Activated T-helper 2 cell treated with anti-CD3 and anti-CD28 coated beads, Interferon-gamma antibody, Interleukin-2, Interleukin-4, amounts not matched to agents 10 μg/mL and 5 μg/mL and 100 μg/mL, durations not matched to agents 14 hours and 24 hours and 36 hours (primary cell): ENCODE measurements at regions of chr6 and their contacts with region 1.

Region 1: DNA sequence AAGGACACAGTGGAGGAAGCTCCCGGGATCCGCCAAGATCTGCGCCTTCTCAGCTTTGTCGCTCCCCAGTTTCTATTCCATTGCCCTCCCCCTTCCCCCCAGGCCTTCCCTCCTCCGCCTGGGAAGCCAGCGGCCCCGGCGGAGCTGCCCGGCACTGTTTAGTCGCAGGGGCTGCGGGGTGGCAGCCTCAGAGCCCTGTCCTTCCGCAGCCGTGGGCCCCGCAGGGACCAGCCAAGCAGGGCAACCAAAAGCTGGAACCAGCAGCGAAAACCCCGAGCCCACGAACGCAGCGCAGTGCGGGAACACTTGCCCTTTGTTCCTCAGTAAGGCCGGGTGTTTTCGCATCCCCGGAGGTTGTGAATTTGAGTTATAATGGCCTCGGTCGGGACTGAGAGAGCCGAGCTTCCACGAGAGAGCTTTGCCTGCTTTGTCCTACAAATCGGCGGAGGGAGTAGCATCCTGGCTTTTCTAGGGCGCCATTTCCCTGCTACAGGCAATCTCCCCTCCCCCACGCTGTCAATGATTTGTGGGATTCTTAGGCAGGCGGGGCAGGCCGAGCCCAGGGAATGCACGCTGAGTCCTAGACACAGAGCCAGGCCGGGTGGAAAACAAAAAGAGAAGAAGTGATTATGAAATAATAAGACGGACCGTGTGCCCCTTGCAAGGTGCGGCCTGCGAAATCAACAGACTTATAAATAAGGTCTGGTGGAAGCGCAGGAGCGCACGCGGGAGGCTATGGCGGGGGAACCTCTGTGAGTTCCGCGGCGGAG is 4.0 kb upstream of the TUBB2B start:
- DNase-seq: no peak
- H3K4me3 Mint-ChIP-seq: no peak overlapping the region
- H3K27ac Mint-ChIP-seq: no peak overlapping the region
- H3K4me1 Mint-ChIP-seq: peaks cover 28% of the 10 kb centered on the region
- H3K27me3 Mint-ChIP-seq: peaks cover 81% of the 10 kb centered on the region

Region 2: DNA sequence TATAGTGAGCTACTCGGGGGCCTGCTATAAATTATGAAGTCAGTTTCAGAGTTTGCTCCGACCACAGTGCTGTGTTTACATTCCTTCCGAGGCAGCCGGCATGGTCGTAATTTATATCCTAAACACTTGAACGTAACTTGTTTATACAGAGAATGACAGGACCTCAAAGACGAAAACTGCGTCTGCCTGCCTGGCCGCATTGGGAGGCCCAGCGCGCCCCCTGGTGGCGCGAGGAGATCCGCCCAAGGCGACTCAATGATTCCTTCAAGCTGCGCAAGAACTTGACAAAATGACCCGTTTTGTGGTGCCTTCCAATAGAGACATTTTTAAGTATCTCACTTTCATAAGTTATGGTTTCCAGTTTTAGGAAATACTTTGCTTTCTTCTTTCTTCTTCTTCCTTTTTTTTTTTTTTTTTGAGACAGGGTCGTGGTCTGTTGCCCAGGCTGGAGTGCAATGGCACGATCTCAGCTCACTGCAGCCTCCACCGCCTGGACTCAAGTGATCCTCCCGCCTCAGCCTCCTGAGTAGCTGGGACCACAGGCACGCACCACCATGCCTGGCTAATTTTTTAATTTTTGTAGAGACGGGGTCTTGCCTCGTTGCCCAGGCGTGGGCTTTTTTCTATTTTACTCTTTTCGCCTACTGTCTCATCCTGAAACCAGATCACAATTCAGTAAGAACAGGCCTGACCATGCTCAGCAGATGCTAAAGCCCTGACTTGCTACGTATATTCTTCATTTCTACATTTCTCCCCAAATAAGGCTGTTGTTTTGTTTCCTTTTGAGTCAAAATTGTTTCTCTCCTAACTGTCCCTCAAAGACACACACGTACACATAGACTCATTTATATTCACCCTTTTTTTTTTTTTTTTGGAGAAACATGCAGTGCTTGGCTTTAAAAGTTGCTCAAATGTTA is 1834.2 kb before region 1 on chr6:
- intact Hi-C with region 1: loop called (anchors 10 kb)
- DNase-seq: peak; percentile 50
- H3K4me3 Mint-ChIP-seq: no peak overlapping the region
- H3K27ac Mint-ChIP-seq: no peak overlapping the region
- H3K4me1 Mint-ChIP-seq: peaks cover 9% of the 10 kb centered on the region
- H3K27me3 Mint-ChIP-seq: peaks cover 56% of the 10 kb centered on the region

Region 3: DNA sequence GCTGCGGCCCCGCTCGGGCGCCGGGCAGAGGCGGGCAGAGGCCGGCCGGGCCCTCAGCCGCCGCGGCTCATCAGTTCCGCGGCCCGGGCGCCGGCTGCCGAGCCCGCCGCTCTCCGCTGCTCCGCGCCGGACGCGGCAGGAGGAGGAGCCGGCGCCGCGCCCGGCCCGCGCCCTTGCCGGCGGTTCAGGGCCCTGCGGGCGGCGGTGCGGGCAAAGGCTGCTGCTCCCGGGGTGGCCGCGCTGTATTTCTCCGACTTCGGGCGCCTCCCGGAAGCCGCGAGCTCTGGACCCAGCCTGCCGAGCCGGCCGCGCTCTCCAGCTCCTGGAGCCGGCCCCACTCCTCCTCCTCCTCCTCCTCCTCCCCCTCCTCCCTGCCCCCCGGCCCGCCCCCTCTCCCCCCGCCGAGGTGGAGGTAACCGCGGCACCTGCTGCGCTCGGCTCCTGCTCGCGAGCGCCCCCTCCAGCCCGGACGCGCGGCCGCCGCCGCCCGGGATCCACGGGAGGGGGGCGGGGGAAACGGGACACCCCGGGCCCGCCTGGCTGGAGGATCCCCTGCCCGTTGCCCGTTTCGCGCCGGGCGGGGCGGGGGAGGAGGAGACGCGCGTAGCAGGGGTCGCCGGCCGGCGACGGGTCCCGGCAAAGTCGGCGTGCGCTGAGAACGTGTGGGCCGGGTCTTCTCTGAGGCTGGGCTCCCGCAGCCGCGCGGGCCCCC is 225.5 kb after region 1 on chr6 and contains the start of gene SLC22A23:
- intact Hi-C with region 1: loop called (anchors 2 kb)
- DNase-seq: peak; percentile 52
- H3K4me3 Mint-ChIP-seq: peak within 1 kb of the TSS; percentile 77
- H3K27ac Mint-ChIP-seq: peak within 1 kb of the TSS; percentile 43
- H3K4me1 Mint-ChIP-seq: peaks cover 8% of the 10 kb centered on the region
- H3K27me3 Mint-ChIP-seq: peaks cover 49% of the 10 kb centered on the region
- total RNA-seq, gene SLC22A23: 0.07 TPM in 1 of 2 replicates, not detected in the other